Activated T-helper 2 cell treated with anti-CD3 and anti-CD28 coated beads, Interferon-gamma antibody, Interleukin-2, Interleukin-4, amounts not matched to agents 10 μg/mL and 5 μg/mL and 100 μg/mL, durations not matched to agents 14 hours and 24 hours and 36 hours (primary cell): ENCODE measurements at regions of chr21 and their contacts with region 1.

Region 1: DNA sequence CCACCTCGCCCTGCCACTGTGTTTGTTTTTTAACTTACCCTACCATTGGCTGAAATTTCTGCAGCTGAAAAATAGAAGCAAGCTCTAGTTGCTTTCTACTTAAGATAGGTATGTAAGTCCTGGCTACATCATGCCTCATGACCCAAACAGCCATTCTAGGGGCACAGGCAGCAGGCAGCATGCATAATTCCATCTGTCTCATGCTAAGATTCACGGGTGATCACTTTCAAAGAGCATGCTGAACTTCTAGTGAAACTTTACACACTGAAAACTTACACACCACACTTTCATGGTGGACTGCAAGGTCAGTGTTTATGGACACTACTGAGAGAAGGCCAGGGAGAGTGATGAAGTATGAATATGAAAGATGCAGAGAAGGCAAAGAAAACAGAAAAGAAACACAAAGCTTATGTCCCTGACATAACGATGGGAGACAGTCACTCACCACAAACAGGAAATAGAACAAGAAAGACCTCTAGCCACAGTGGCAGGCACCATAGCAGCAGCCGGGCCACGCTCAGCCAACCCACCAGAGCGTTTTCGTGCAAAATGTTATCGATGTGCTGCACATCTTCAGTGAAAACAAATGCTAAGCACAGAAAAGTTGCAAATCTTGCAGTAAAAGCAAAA is 102.3 kb upstream of the TIAM1 start:
- DNase-seq: peak; percentile 32
- H3K4me3 Mint-ChIP-seq: peak overlapping the region; percentile 22
- H3K27ac Mint-ChIP-seq: no peak overlapping the region
- H3K4me1 Mint-ChIP-seq: peaks cover 35% of the 10 kb centered on the region
- H3K27me3 Mint-ChIP-seq: peaks cover 2% of the 10 kb centered on the region

Region 2: DNA sequence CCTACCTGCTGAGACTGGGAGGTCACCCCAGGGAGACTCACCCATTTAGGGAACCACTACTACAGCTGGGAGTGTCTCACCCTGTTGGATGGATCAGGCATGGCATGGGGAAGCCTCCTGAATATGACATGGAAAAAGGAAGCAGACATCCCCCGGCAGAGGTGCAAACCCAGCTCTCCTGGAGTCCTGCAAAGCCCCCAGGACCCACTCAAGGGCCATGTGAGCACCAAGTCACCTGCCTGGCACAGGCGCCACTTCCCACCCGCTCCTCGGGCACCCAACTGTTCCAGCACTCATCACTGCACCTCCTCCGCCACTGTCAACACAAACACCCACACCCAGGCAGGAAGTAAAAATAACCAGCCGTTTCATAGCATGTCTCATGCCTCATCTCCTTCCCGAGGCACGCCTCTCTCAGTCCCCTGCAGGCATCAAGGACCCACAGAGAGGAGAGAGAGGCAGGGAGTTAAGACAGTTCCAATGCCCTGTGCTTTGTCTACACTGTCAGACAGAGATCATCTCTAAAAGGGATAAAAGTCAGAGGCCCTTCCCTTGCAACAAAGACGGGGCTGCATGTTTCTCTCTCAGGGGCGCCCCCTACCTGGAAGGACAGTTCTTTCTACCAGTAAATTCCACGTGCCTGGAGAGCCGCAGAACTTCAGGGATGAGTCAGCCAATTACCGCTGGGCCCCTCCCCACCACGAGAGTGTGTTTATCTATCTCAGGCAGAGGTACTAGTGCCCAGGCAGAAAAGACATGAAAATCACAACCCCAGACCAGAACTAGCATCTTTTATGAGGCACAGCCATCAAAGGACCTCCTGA is 63.1 kb after region 1 on chr21:
- intact Hi-C with region 1: loop called (anchors 2 kb)
- DNase-seq: peak; percentile 80
- H3K4me3 Mint-ChIP-seq: no peak overlapping the region
- H3K27ac Mint-ChIP-seq: no peak overlapping the region
- H3K4me1 Mint-ChIP-seq: peaks cover 24% of the 10 kb centered on the region
- H3K27me3 Mint-ChIP-seq: peaks cover 40% of the 10 kb centered on the region